A673 (cell line): ENCODE measurements at regions of chrX and their contacts with region 1.

Region 1: DNA sequence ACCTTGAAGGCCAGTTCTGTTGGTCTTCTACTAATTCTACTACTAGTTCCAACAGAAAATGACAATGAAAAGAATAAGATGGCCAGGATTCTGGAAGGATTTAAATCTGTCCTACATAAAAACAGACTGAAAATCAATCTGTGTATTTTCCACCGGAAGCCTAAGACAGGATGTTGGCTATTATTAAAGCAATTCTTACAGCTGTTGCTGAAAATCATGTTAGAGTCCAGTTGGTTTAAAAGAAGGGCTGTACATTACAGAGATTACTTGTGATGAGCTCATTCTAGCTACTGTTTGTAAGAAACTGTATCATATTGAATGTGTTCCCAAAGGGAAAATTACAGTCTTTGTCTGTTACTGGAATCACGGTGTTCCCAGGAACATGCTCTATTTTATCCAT is 54.8 kb upstream of the MAGEB16 start:
- DNase-seq: no peak
- H3K4me3 ChIP-seq: no peak overlapping the region
- H3K27ac ChIP-seq: no peak overlapping the region
- H3K4me1 ChIP-seq: no peaks in the 10 kb centered on the region
- H3K27me3 ChIP-seq: no peaks in the 10 kb centered on the region
- CTCF ChIP-seq: no peak

Region 2: GRCh38 chrX:34927861-34928260 is 815.5 kb before region 1 on chrX:
- CTCF ChIA-PET with region 1: no interaction called
- POLR2A ChIA-PET with region 1: no interaction called
- intact Hi-C with region 1: loop called (anchors 10 kb)
- DNase-seq: no peak
- H3K4me3 ChIP-seq: no peak overlapping the region
- H3K27ac ChIP-seq: no peak overlapping the region
- H3K4me1 ChIP-seq: no peaks in the 10 kb centered on the region
- H3K27me3 ChIP-seq: no peaks in the 10 kb centered on the region
- CTCF ChIP-seq: no peak

Region 3: GRCh38 chrX:35841872-35842271 is 98.5 kb after region 1 on chrX:
- CTCF ChIA-PET with region 1: no interaction called
- POLR2A ChIA-PET with region 1: no interaction called
- intact Hi-C with region 1: no loop called
- DNase-seq: no peak
- H3K4me3 ChIP-seq: no peak overlapping the region
- H3K27ac ChIP-seq: no peak overlapping the region
- H3K4me1 ChIP-seq: no peaks in the 10 kb centered on the region
- H3K27me3 ChIP-seq: no peaks in the 10 kb centered on the region
- CTCF ChIP-seq: no peak

Region 4: GRCh38 chrX:35868501-35868900 is 125.2 kb after region 1 on chrX:
- CTCF ChIA-PET with region 1: no interaction called
- POLR2A ChIA-PET with region 1: no interaction called
- intact Hi-C with region 1: no loop called
- DNase-seq: peak; percentile 10
- H3K4me3 ChIP-seq: no peak overlapping the region
- H3K27ac ChIP-seq: no peak overlapping the region
- H3K4me1 ChIP-seq: no peaks in the 10 kb centered on the region
- H3K27me3 ChIP-seq: no peaks in the 10 kb centered on the region
- CTCF ChIP-seq: no peak